ENCODE measurements at regions of chr10 and their contacts with region 1.

Region 1: GRCh38 chr10:53314876-53315275 is 542.3 kb upstream of the MBL2 start:
- DNase-seq: peak; percentile 87
- H3K4me3 ChIP-seq: no peak overlapping the region
- H3K27ac ChIP-seq: peak overlapping the region; percentile 39
- H3K4me1 ChIP-seq: no peaks in the 10 kb centered on the region
- H3K27me3 ChIP-seq: no peaks in the 10 kb centered on the region
- CTCF ChIP-seq: no peak

Region 2: GRCh38 chr10:53209944-53210611 is 104.8 kb before region 1 on chr10:
- CTCF ChIA-PET with region 1: no interaction called
- dilution Hi-C with region 1: no loop called
- in situ Hi-C with region 1: no loop called
- intact Hi-C with region 1: loop called (anchors 1 kb)
- DNase-seq: peak; percentile 39
- H3K4me3 ChIP-seq: no peak overlapping the region
- H3K27ac ChIP-seq: no peak overlapping the region
- H3K4me1 ChIP-seq: no peaks in the 10 kb centered on the region
- H3K27me3 ChIP-seq: no peaks in the 10 kb centered on the region
- CTCF ChIP-seq: peak; percentile 64 to 66

Region 3: GRCh38 chr10:53387562-53387961 is 72.7 kb after region 1 on chr10:
- CTCF ChIA-PET with region 1: no interaction called
- dilution Hi-C with region 1: no loop called
- in situ Hi-C with region 1: no loop called
- intact Hi-C with region 1: no loop called
- DNase-seq: no peak
- H3K4me3 ChIP-seq: no peak overlapping the region
- H3K27ac ChIP-seq: no peak overlapping the region
- H3K4me1 ChIP-seq: no peaks in the 10 kb centered on the region
- H3K27me3 ChIP-seq: no peaks in the 10 kb centered on the region
- CTCF ChIP-seq: no peak

Region 4: GRCh38 chr10:53528974-53529373 is 214.1 kb after region 1 on chr10:
- CTCF ChIA-PET with region 1: no interaction called
- dilution Hi-C with region 1: no loop called
- in situ Hi-C with region 1: no loop called
- intact Hi-C with region 1: no loop called
- DNase-seq: no peak
- H3K4me3 ChIP-seq: no peak overlapping the region
- H3K27ac ChIP-seq: no peak overlapping the region
- H3K4me1 ChIP-seq: no peaks in the 10 kb centered on the region
- H3K27me3 ChIP-seq: no peaks in the 10 kb centered on the region
- CTCF ChIP-seq: no peak

Region 5: DNA sequence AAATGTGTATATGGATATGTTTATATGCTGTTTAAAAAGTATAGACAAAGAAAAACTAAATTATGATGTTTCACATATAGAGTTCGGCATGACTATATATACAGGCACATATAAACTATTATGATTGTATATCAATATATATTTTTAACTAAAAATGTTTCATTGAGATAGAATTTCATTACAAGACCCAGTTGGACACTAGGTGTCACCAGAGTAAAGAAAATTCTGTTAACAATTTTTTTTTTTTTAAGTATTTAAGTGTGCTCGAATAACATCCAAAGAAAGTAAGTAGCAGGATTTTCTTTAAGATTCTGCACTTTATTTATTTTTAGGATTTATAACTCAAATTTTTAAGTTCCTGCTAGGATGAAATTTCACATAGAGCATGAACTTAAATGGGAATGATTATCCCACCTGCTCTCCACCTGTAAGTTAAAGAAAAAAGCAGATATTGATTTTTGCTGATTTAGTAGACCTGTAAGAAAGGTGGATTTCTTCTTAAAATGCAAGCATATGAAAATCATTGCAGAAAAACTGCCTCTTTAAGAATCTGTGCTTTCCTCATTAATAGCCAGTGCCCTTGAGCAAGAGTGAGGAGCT is 524.7 kb after region 1 on chr10:
- CTCF ChIA-PET with region 1: no interaction called
- dilution Hi-C with region 1: no loop called
- in situ Hi-C with region 1: no loop called
- intact Hi-C with region 1: loop called (anchors 5 kb)
- DNase-seq: peak; percentile 8
- H3K4me3 ChIP-seq: no peak overlapping the region
- H3K27ac ChIP-seq: no peak overlapping the region
- H3K4me1 ChIP-seq: peaks cover 5% of the 10 kb centered on the region
- H3K27me3 ChIP-seq: no peaks in the 10 kb centered on the region
- CTCF ChIP-seq: peak; percentile 41 to 59

Region 6: GRCh38 chr10:54124209-54124885 is 809.5 kb after region 1 on chr10:
- CTCF ChIA-PET with region 1: no interaction called
- dilution Hi-C with region 1: no loop called
- in situ Hi-C with region 1: no loop called
- intact Hi-C with region 1: loop called (anchors 5 kb)
- DNase-seq: peak; percentile 37
- H3K4me3 ChIP-seq: no peak overlapping the region
- H3K27ac ChIP-seq: peak overlapping the region; percentile 44
- H3K4me1 ChIP-seq: peaks cover 4% of the 10 kb centered on the region
- H3K27me3 ChIP-seq: no peaks in the 10 kb centered on the region
- CTCF ChIP-seq: no peak